ENCODE measurements at regions of chr15 and their contacts with region 1.

Region 1: GRCh38 chr15:64731012-64731806 is 44.2 kb downstream of the RBPMS2 start:
- DNase-seq: peak; percentile 76 to 83 (median 78)
- H3K4me3 ChIP-seq: no peak overlapping the region
- H3K27ac ChIP-seq: no peak overlapping the region
- H3K4me1 ChIP-seq: peaks cover 0 to 4% (median 1%) of the 10 kb centered on the region in 4 experiments
- H3K27me3 ChIP-seq: peaks cover 0 to 2% (median 0%) of the 10 kb centered on the region in 5 experiments

Region 2: DNA sequence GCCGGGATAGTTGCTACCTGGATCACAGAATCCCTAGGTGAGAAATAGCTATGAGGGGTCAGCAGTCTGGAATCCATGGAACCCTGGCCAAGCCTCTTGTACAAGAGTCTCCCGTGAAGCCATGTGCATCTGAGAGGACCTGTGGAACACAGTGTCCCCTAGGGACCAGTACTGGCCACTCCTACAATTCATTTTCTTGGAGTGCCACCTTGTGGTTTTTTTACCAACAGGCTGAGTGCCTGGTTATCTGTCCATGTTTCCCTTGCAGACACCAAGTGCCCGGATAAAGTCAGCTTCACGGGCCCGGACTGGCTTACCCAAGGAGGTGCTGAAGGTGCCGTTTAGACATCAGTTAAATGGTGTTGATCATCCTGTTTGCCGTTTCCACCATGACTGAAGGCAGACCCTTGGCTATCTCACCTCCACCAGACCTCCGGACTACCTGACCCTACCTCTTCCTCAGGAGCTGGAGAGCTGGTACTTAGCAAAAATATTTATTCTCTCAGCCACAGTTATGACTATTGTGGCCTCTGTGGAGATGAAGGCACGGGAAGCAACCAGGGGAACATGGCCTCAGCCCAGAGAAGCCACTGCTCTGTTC is 49.7 kb before region 1 on chr15:
- CTCF ChIA-PET with region 1: interaction called, 625 read pairs
- POLR2A ChIA-PET with region 1: interaction called, 4 read pairs
- DNase-seq: peak; percentile 54 to 66 (median 62)
- H3K4me3 ChIP-seq: no peak overlapping the region
- H3K27ac ChIP-seq: no peak overlapping the region
- H3K4me1 ChIP-seq: no peaks in the 10 kb centered on the region
- H3K27me3 ChIP-seq: no peaks in the 10 kb centered on the region

Region 3: GRCh38 chr15:64702816-64703646 is 28.2 kb before region 1 on chr15:
- CTCF ChIA-PET with region 1: interaction called, 625 read pairs
- POLR2A ChIA-PET with region 1: no interaction called
- DNase-seq: peak; percentile 87 to 92 (median 92)
- H3K4me3 ChIP-seq: peak overlapping the region; percentile 70 to 88 (median 85)
- H3K27ac ChIP-seq: peak overlapping the region; percentile 74 to 93
- H3K4me1 ChIP-seq: peaks cover 27 to 55% (median 45%) of the 10 kb centered on the region in 4 experiments
- H3K27me3 ChIP-seq: no peaks in the 10 kb centered on the region

Region 4: GRCh38 chr15:64717735-64718495 is 13.3 kb before region 1 on chr15:
- CTCF ChIA-PET with region 1: interaction called, 25 read pairs
- POLR2A ChIA-PET with region 1: no interaction called
- DNase-seq: peak in 2 of 3 donors; percentile 56 to 70
- H3K4me3 ChIP-seq: peak overlapping the region in 1 of 7 experiments; percentile 48
- H3K27ac ChIP-seq: no peak overlapping the region
- H3K4me1 ChIP-seq: peaks cover 3 to 18% (median 13%) of the 10 kb centered on the region in 4 experiments
- H3K27me3 ChIP-seq: no peaks in the 10 kb centered on the region

Region 5: GRCh38 chr15:64809649-64810496 is 78.7 kb after region 1 on chr15:
- CTCF ChIA-PET with region 1: interaction called, 52 read pairs
- POLR2A ChIA-PET with region 1: no interaction called
- DNase-seq: peak; percentile 61 to 65 (median 64)
- H3K4me3 ChIP-seq: no peak overlapping the region
- H3K27ac ChIP-seq: no peak overlapping the region
- H3K4me1 ChIP-seq: peaks cover 0 to 9% (median 2%) of the 10 kb centered on the region in 4 experiments
- H3K27me3 ChIP-seq: peaks cover 0 to 3% (median 0%) of the 10 kb centered on the region in 5 experiments

Region 6: GRCh38 chr15:64905119-64905831 is 174.1 kb after region 1 on chr15:
- CTCF ChIA-PET with region 1: interaction called, 41 read pairs
- POLR2A ChIA-PET with region 1: interaction called, 3 read pairs
- DNase-seq: peak; percentile 81 to 86 (median 86)
- H3K4me3 ChIP-seq: peak overlapping the region in 4 of 7 experiments; percentile 55 to 73 (median 63)
- H3K27ac ChIP-seq: no peak overlapping the region
- H3K4me1 ChIP-seq: peaks cover 3 to 10% (median 6%) of the 10 kb centered on the region in 4 experiments
- H3K27me3 ChIP-seq: peaks cover 0 to 1% (median 0%) of the 10 kb centered on the region in 5 experiments

Region 7: DNA sequence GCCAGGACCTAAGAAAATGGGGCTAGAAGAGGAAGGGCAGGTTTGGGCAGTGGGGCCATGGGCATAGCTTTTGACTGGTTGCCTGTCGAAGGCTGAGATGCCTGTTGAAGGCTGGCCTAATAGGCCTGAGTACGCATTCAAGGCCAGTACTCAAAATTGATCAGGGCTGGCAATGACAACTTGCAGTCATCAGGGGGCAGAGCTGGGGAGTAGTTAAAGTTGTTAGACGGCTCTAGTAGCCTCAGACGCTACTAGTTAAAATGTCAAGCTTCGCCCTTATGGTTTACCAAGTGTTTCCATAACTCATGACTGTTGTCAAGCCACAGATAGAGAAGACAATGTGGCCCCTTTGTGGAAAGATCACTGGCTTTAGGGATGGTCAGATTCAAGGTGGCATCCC is 229.8 kb after region 1 on chr15:
- CTCF ChIA-PET with region 1: no interaction called
- POLR2A ChIA-PET with region 1: no interaction called
- DNase-seq: no peak
- H3K4me3 ChIP-seq: no peak overlapping the region
- H3K27ac ChIP-seq: no peak overlapping the region
- H3K4me1 ChIP-seq: no peaks in the 10 kb centered on the region
- H3K27me3 ChIP-seq: no peaks in the 10 kb centered on the region

Region 8: DNA sequence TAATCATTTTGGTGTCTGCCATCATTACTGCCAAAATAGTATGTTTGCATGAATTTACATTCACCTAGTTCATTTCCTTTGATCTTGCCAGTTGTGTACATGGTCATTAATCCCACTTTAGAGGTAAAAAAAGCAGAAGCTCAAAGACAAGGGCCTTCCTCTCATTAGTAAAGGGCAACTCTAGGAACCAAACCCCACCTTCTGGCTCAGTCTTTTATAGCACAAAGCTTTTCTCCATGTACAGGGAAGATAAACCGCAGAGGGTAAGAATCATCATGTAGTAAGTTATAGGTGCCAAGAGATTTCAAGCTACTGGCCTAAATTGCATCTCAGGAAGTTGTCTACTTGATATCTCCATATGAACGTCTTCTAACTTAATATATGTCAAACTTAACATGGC is 277.8 kb after region 1 on chr15:
- CTCF ChIA-PET with region 1: interaction called, 14 read pairs
- POLR2A ChIA-PET with region 1: no interaction called
- DNase-seq: peak; percentile 52 to 74 (median 73)
- H3K4me3 ChIP-seq: no peak overlapping the region
- H3K27ac ChIP-seq: no peak overlapping the region
- H3K4me1 ChIP-seq: peaks cover 0 to 15% (median 3%) of the 10 kb centered on the region in 4 experiments
- H3K27me3 ChIP-seq: no peaks in the 10 kb centered on the region

Measured in common myeloid progenitor, CD34-positive (primary cell).